ENCODE measurements at regions of chr20 and their contacts with region 1.

Region 1: DNA sequence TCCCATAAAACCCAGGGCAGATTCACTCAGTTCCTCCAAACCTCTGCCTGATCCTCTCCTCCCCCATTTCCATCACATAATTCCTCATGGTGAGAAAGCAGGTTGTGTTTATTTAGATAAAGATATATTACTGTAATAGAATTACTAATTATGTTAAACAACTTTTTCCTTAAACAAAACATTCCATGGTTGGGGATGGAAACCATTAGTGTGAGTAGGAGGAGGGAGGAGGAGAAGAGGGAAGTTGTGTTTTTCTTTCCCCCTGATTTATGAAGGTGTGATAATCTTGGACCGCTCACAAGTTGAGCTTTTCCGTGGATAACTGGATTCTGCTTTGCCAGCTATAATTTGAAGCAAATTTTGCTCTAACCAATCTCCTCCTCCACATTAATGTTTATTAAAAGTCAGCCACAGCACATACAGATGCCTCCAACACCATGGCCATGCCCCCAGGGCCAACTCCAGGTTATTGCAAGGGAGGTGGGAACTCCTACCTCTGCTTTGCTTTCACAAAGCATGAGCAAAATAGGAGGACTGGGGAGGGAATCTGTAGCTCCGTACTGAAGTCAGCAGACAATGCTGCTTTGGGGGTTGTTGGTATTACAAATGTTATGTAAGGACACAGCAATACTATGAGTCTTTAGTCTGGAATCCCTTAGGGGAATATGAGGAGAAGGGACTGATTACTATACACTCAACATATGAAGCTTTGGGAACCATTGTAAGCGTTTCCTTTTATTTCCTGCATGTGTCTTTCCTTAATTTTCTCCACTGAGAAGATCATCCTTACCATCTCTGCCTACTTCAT is 542.0 kb downstream of the DHX35 start:
- DNase-seq: no peak
- ATAC-seq: no peak
- H3K4me3 ChIP-seq: no peak overlapping the region
- H3K27ac ChIP-seq: no peak overlapping the region
- H3K4me1 ChIP-seq: no peaks in the 10 kb centered on the region
- H3K27me3 ChIP-seq: no peaks in the 10 kb centered on the region
- CTCF ChIP-seq: no peak

Region 2: DNA sequence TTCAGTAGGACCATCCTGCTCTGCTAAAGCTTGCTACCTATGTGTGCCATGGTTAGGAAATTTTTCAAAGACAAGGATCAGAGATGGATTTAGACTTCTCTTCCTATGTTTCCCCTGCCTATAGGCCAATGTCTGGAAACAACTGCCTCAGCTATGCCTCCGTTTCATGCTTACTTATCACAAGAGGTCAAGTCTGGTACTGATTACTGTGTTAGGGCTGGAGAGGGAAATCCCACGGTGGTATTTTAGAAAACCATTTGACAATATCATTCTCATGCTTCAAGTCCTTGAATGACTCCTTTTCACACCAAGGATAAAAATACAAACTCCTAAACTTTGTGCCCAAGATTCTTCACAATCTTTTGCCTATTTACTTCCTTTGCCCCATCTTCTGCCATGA is 57.7 kb before region 1 on chr20:
- intact Hi-C with region 1: loop called in 1 of 2 experiments (anchors 5 kb)
- DNase-seq: no peak
- ATAC-seq: no peak
- H3K4me3 ChIP-seq: no peak overlapping the region
- H3K27ac ChIP-seq: no peak overlapping the region
- H3K4me1 ChIP-seq: no peaks in the 10 kb centered on the region
- H3K27me3 ChIP-seq: no peaks in the 10 kb centered on the region
- CTCF ChIP-seq: no peak